ENCODE measurements at regions of chrX and their contacts with region 1.

Region 1: GRCh38 chrX:139831675-139832456 is 101.0 kb downstream of the ATP11C start:
- DNase-seq: peak; percentile 38
- H3K4me3 ChIP-seq: no peak overlapping the region
- H3K27ac ChIP-seq: no peak overlapping the region
- H3K4me1 ChIP-seq: no peaks in the 10 kb centered on the region
- H3K27me3 ChIP-seq: no peaks in the 10 kb centered on the region
- CTCF ChIP-seq: no peak

Region 2: GRCh38 chrX:139600105-139600504 is 231.8 kb before region 1 on chrX:
- intact Hi-C with region 1: no loop called
- DNase-seq: no peak
- H3K4me3 ChIP-seq: no peak overlapping the region
- H3K27ac ChIP-seq: no peak overlapping the region
- H3K4me1 ChIP-seq: no peaks in the 10 kb centered on the region
- H3K27me3 ChIP-seq: no peaks in the 10 kb centered on the region
- CTCF ChIP-seq: no peak

Region 3: DNA sequence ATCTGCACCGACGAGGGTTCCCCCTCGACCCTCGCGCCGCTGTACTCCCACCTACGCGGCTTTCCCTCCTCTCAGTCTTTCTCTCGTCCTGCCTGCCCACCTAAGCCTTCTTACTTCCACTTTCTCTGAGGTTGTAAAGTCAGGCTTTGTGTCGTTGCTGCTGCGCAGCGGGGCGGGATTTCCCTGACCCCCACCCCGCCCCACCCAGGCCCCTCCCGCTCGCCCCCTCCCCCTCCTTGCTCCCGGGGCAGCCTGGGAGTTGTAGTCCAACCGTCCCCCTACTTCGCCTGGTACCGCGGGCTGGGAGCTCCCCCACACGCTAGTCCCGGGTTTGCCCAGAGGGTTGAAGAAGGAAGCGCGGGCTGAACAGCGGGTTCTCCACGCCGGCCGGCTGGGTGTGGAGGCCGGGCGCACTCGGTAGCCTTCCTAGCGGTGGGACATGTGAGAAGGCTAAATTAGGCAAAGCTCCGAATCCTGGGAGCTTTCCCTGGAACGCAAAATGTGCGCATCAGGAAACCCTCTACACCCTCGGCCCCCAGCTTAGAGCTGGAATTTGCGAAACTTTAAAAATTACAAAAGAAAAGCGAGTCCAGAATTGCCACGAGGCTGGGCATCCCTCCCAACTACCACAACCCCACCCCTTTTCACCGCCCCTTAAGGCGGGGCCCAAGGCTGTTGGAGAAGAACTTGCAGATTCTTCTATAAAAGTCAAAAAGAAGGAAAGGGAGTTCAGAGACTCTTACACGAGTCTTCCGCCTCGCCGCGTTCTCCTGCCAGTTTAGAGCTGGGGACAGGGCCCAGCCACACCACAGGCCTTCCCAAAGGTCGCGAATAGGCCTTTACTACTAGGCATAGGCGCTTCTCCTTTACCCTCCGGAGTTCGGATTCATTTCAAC is 101.3 kb after region 1 on chrX and contains the start of gene ATP11C:
- intact Hi-C with region 1: loop called (anchors 10 kb)
- DNase-seq: peak; percentile 85
- H3K4me3 ChIP-seq: peak within 1 kb of the TSS; percentile 61
- H3K27ac ChIP-seq: peak within 1 kb of the TSS; percentile 98
- H3K4me1 ChIP-seq: no peaks in the 10 kb centered on the region
- H3K27me3 ChIP-seq: no peaks in the 10 kb centered on the region
- CTCF ChIP-seq: no peak
- total RNA-seq, gene ATP11C: 9.1 to 15.3 TPM

Measured in colonic mucosa (tissue), 4 donors.